ENCODE measurements at regions of chr3 and their contacts with region 1.

Region 1: GRCh38 chr3:167691366-167691765 is 37.6 kb upstream of the WDR49 start:
- DNase-seq: peak in 7 of 14 experiments; percentile 1 to 69 (median 21)
- ATAC-seq: peak; percentile 97
- H3K4me3 ChIP-seq: no peak overlapping the region
- H3K4me3 Mint-ChIP-seq: peak overlapping the region; percentile 20
- H3K27ac ChIP-seq: peak overlapping the region in 1 of 2 donors; percentile 23
- H3K27ac Mint-ChIP-seq: peak overlapping the region; percentile 85
- H3K4me1 ChIP-seq: peaks cover 5% of the 10 kb centered on the region
- H3K4me1 Mint-ChIP-seq: peaks cover 33% of the 10 kb centered on the region
- H3K27me3 ChIP-seq: no peaks in the 10 kb centered on the region
- H3K27me3 Mint-ChIP-seq: no peaks in the 10 kb centered on the region
- CTCF ChIP-seq: no peak

Region 2: DNA sequence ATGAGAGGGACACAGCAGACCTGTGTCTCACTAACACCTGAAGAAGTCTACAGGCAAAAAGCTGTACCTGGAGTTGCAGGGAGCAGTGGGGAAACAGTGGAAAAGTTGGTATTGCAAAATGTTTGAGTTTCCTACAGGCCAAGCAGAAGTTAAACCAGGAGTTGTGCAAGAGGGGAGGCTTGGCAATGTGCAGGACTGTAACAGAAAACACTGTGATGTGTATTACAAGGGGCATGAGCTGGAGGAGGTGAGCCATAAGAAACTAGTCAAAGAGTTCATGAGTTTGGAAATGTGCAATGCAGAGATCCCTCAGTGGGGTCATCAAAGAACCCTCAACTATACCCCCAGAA is 170.4 kb before region 1 on chr3:
- CTCF ChIA-PET with region 1: no interaction called
- POLR2A ChIA-PET with region 1: no interaction called
- intact Hi-C with region 1: no loop called
- DNase-seq: peak in 2 of 14 experiments; percentile 54 to 58
- ATAC-seq: no peak
- H3K4me3 ChIP-seq: no peak overlapping the region
- H3K4me3 Mint-ChIP-seq: no peak overlapping the region
- H3K27ac ChIP-seq: no peak overlapping the region
- H3K27ac Mint-ChIP-seq: no peak overlapping the region
- H3K4me1 ChIP-seq: no peaks in the 10 kb centered on the region
- H3K4me1 Mint-ChIP-seq: no peaks in the 10 kb centered on the region
- H3K27me3 ChIP-seq: no peaks in the 10 kb centered on the region
- H3K27me3 Mint-ChIP-seq: no peaks in the 10 kb centered on the region
- CTCF ChIP-seq: no peak

Region 3: DNA sequence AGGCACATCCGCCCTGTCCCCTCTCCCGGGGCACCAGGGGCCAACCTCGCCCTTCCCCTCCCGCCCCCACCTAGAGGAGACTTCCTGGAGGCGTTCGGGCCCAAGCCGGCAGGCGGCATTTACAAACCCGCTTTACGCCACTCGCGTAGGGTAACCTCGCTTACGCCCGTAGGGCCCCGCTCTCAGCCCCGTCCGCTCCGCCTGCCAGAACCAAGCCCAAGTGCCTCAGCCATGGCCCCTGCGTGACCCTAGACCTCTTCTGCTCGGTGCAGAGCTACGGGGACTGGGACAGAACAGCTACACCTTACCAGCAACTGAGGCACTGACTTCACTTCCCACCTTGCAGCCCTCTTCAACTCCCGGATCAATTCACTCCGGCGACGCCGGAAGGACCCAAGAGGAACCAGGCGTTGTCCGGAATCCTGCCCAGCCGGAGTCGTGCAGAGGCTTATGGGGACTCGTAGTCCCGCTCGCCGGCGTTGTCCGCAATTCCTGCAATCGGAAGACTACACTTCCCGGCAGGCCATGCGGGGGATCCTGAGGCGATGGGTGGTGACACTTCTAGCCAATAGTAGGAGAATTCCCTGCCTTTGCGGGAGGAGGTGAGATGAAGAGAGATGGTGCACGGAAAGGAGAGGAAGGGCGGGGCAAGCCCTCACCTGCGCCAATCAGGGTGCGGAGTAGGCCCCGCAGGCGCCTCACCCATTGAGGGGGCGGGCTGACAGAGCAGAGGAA is 43.3 kb after region 1 on chr3 and contains the start of gene PDCD10:
- CTCF ChIA-PET with region 1: no interaction called
- POLR2A ChIA-PET with region 1: no interaction called
- intact Hi-C with region 1: loop called in 1 of 2 experiments (anchors 5 kb)
- DNase-seq: peak; percentile 92 to 99 (median 95)
- ATAC-seq: peak; percentile 85
- H3K4me3 ChIP-seq: peak within 1 kb of the TSS; percentile 80
- H3K4me3 Mint-ChIP-seq: no peak within 1 kb of the TSS
- H3K27ac ChIP-seq: peak within 1 kb of the TSS; percentile 77 to 80
- H3K27ac Mint-ChIP-seq: no peak within 1 kb of the TSS
- H3K4me1 ChIP-seq: peaks cover 7% of the 10 kb centered on the region
- H3K4me1 Mint-ChIP-seq: peaks cover 16% of the 10 kb centered on the region
- H3K27me3 ChIP-seq: no peaks in the 10 kb centered on the region
- H3K27me3 Mint-ChIP-seq: no peaks in the 10 kb centered on the region
- CTCF ChIP-seq: no peak
- total RNA-seq, gene PDCD10: 19.0 to 22.8 TPM

Measured in CD4-positive, alpha-beta T cell (primary cell).